Sigmoid colon (tissue), 7 donors: ENCODE measurements at regions of chr16 and their contacts with region 1.

Region 1: DNA sequence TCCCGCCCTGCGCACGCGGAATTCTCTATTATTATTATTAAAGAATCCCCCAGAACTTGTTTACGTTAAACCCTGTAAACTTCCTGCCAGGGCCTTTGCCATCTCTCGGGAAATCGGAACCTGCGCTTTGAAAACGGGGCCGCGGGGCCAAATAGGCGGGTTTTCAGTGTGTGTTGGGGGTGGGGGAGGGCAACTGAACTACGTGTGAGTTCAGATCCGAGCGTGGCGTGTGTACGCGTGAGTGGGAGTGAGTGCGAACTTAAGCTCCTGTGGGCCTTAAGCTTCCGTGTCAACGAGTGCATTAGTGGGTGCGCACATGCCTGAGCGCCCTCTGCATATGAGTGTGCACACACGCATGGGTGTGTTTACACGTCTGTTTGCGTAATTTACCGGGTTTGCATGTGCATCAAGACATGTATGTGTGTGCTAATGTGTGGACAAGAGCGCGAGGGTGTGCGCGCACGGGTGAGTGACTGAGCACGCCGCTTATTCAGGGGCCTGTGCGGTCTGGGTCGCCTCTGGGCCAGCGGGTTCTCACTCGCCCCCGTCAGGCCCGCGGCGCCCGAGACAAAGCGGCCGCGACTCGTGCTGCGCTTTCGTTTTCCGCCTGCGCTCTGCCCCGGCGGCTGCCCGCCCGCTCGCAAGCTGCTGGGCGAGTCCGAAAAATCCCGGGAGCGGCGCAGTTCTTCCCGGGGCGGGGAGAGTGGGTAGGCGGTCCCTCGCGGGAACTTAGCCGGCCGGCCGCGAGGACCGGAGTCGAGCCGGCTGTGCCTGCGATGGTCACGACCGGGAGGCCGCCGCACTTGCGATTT is 1.2 kb upstream of the FOXF1 start:
- DNase-seq: peak; percentile 93
- H3K4me3 ChIP-seq: peak overlapping the region; percentile 81 to 95 (median 86)
- H3K27ac ChIP-seq: peak overlapping the region; percentile 99 to 100 (median 99)
- H3K4me1 ChIP-seq: peaks cover 0 to 27% (median 3%) of the 10 kb centered on the region in 4 donors
- H3K27me3 ChIP-seq: peaks cover 0 to 4% (median 0%) of the 10 kb centered on the region in 3 donors
- CTCF ChIP-seq: no peak
- EP300 ChIP-seq: peak in 3 of 4 donors; percentile 6 to 35 (median 33)
- POLR2A ChIP-seq: peak; percentile 24 to 40

Region 2: GRCh38 chr16:86300746-86301481 is 208.2 kb before region 1 on chr16:
- intact Hi-C with region 1: loop called (anchors 5 kb)
- DNase-seq: peak; percentile 72
- H3K4me3 ChIP-seq: peak overlapping the region in 3 of 4 donors; percentile 19 to 38 (median 34)
- H3K27ac ChIP-seq: peak overlapping the region in 3 of 4 donors; percentile 93 to 96 (median 94)
- H3K4me1 ChIP-seq: peaks cover 0 to 89% (median 80%) of the 10 kb centered on the region in 4 donors
- H3K27me3 ChIP-seq: no peaks in the 10 kb centered on the region
- CTCF ChIP-seq: no peak
- EP300 ChIP-seq: no peak
- POLR2A ChIP-seq: no peak

Region 3: DNA sequence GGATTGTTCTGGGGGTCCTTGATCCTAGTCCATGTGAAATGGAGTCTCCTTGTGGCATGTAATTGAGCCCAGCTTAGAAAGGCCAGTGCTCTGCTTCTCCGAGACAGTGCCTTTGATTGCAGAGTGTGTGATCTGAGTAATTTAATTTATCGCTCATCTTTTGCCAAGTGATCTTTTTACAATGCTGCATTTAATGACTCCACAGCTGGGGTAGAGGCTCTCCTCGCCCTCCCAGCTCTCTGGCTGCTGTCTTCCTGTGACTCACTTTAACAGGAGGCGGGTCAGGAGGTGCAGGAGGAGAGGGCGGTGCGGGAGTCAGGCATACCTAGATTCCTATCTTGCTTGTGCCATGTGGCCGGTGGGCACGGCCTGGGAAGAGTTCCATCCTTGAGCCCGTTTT is 112.3 kb before region 1 on chr16:
- intact Hi-C with region 1: loop called (anchors 5 kb)
- DNase-seq: peak; percentile 95
- H3K4me3 ChIP-seq: peak overlapping the region in 1 of 4 donors; percentile 12
- H3K27ac ChIP-seq: peak overlapping the region; percentile 88 to 94 (median 91)
- H3K4me1 ChIP-seq: peaks cover 0 to 28% (median 23%) of the 10 kb centered on the region in 4 donors
- H3K27me3 ChIP-seq: no peaks in the 10 kb centered on the region
- CTCF ChIP-seq: no peak
- EP300 ChIP-seq: peak; percentile 52 to 92 (median 73)
- POLR2A ChIP-seq: no peak

Region 4: DNA sequence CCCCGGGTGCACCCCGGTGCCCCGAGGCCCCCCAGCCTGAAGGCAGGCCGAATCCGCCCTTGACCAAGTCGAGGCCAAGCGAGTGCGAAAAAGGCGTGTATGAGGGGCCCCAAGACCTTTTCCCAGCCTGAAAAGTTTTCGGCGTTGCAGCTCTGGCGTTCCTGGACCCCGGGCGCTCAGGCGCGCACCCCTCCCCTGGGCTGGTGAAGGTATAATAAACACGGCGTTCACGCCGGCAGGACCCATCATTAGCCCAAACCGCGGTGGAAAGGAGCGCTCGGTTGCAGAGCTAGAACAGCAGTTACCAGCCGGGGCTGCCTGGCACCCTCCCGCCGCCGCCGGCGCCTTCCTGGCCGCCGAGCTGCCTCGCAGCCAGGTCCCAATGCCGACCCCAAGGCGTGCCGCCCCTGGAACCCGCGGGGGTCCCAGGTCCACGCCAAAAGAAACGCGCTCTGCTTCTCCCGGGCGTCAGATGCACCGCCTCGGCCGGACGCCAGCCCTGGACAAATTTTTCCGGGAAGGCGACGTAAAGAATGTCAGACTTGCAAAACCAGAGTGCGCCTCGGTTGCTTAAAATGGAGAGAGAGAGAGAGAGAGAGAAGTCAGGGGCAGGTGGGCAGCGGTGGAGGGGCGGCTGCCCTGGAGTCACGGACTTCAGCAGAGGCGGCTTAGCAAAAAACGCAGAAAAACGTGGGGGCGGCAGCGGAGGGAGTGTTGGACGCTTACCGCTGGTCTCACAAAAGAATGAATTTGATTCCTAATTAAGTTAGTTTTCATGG is 10.3 kb before region 1 on chr16:
- intact Hi-C with region 1: loop called (anchors 2 kb)
- DNase-seq: peak; percentile 88
- H3K4me3 ChIP-seq: peak overlapping the region; percentile 65 to 84 (median 68)
- H3K27ac ChIP-seq: peak overlapping the region; percentile 99 to 100 (median 99)
- H3K4me1 ChIP-seq: peaks cover 0 to 81% (median 59%) of the 10 kb centered on the region in 4 donors
- H3K27me3 ChIP-seq: peaks cover 0 to 31% (median 0%) of the 10 kb centered on the region in 3 donors
- CTCF ChIP-seq: no peak
- EP300 ChIP-seq: no peak
- POLR2A ChIP-seq: peak; percentile 8 to 9